ENCODE measurements at regions of chr2 and their contacts with region 1.

Region 1: GRCh38 chr2:49780949-49781348 is 626.6 kb upstream of the FSHR start:
- DNase-seq: no peak
- H3K4me3 ChIP-seq: no peak overlapping the region
- H3K27ac ChIP-seq: no peak overlapping the region
- H3K4me1 ChIP-seq: no peaks in the 10 kb centered on the region
- H3K27me3 ChIP-seq: no peaks in the 10 kb centered on the region
- CTCF ChIP-seq: no peak
- EP300 ChIP-seq: no peak
- POLR2A ChIP-seq: no peak

Region 2: DNA sequence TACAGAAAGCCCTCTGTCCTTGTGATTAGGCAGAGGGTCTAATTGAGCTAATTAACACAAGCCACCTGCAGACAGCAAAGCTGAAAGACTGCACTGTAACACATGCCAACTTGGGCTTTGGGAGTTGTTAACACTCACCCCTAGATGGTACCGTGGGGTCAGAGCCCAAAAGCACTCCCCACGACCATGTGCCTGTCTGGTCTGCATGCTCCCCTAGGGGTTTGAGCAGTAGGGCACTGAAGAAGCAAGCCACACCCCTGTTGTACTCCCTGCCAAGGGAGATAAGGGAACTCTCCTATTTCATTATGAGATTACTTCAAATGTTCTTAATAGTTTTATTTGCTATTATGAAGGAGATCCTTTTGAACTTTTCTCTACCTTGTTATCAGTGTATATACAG is 66.5 kb before region 1 on chr2:
- in situ Hi-C with region 1: no loop called
- intact Hi-C with region 1: no loop called
- DNase-seq: no peak
- H3K4me3 ChIP-seq: no peak overlapping the region
- H3K27ac ChIP-seq: no peak overlapping the region
- H3K4me1 ChIP-seq: no peaks in the 10 kb centered on the region
- H3K27me3 ChIP-seq: no peaks in the 10 kb centered on the region
- CTCF ChIP-seq: no peak
- EP300 ChIP-seq: no peak
- POLR2A ChIP-seq: no peak

Region 3: DNA sequence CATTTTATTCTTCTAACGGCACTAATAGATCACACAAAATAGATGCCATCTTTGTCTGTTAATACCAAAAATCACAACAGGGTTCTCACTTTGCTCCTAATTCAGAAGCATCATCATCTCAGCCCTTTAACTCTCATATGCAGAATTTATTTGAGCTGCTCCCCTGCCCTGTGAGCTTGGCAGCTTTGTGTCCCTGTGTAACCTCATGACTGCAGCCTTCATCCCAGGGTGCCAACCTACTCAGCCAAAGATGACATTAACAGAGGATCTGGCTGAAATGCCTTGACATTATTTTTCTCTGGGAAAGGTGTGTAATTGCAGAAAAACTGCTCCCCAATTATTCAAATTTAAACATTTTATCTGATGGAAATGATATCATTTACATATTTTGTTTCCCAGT is 931.6 kb after region 1 on chr2:
- in situ Hi-C with region 1: no loop called
- intact Hi-C with region 1: loop called (anchors 5 kb)
- DNase-seq: no peak
- H3K4me3 ChIP-seq: no peak overlapping the region
- H3K27ac ChIP-seq: no peak overlapping the region
- H3K4me1 ChIP-seq: no peaks in the 10 kb centered on the region
- H3K27me3 ChIP-seq: no peaks in the 10 kb centered on the region
- CTCF ChIP-seq: no peak
- EP300 ChIP-seq: no peak
- POLR2A ChIP-seq: no peak

Measured in transverse colon (tissue), 4 donors.